MCF 10A (cell line): ENCODE measurements at regions of chr9 and their contacts with region 1.

Region 1: DNA sequence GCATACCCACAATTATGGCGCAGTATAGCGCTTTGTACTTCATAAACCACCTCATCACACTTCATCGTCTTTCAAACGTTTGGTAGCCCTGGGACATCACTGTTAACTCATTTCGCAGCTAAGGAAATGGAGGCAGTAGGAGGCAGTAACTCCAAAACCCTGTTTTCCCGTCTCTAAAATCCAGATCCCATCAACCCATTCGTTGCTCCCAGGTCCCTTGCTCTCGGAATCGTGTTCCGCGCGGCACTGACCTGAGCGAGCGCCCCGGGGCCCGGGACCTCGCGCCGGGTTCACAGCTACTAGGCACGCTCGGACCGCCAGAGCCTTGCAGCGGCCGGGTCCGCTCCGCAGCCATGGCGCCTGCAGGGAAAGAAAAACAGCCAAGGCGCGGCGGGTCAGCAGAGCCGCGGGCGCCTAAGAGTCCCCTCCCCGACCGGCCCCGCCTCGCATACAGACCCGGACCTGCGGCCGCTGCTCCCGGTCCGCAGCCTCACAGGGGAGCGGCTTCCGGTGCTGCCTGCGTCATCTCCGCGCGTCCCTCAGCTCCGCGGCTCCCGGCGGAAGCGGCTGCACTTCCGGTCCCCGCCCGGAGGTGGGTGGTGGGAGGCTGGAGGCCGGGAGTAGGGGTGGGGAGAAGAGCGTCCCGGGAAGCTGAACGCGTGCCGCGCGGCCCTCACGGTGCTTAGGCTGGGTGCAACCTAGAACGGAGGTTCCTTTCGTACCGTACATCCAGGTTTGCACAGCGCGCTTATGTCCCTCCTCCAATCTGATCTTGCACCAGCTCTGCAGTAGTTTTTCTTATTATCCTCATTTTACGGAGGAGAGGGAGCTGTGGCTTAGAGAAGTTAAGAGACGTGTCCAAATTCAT is at the start of gene FBXW2:
- DNase-seq: peak; percentile 88
- H3K4me3 Mint-ChIP-seq: peak within 1 kb of the TSS; percentile 89
- H3K27ac Mint-ChIP-seq: peak within 1 kb of the TSS; percentile 97
- H3K4me1 Mint-ChIP-seq: peaks cover 10% of the 10 kb centered on the region
- H3K27me3 Mint-ChIP-seq: no peaks in the 10 kb centered on the region
- CTCF ChIP-seq: no peak
- total RNA-seq, gene FBXW2: 53.9 and 58.4 TPM in 2 replicates

Region 2: GRCh38 chr9:120714088-120714845 is 78.9 kb before region 1 on chr9 and contains the start of gene MEGF9:
- CTCF ChIA-PET with region 1: no interaction called
- POLR2A ChIA-PET with region 1: interaction called, 25 read pairs
- intact Hi-C with region 1: no loop called
- DNase-seq: peak; percentile 98
- H3K4me3 Mint-ChIP-seq: peak within 1 kb of the TSS; percentile 91
- H3K27ac Mint-ChIP-seq: peak within 1 kb of the TSS; percentile 95
- H3K4me1 Mint-ChIP-seq: peaks cover 20% of the 10 kb centered on the region
- H3K27me3 Mint-ChIP-seq: no peaks in the 10 kb centered on the region
- CTCF ChIP-seq: no peak
- total RNA-seq, gene MEGF9: 5.7 and 6.9 TPM in 2 replicates

Region 3: GRCh38 chr9:120767456-120768167 is 25.5 kb before region 1 on chr9:
- CTCF ChIA-PET with region 1: interaction called, 6 read pairs
- POLR2A ChIA-PET with region 1: interaction called, 18 read pairs
- intact Hi-C with region 1: no loop called
- DNase-seq: no peak
- H3K4me3 Mint-ChIP-seq: no peak overlapping the region
- H3K27ac Mint-ChIP-seq: no peak overlapping the region
- H3K4me1 Mint-ChIP-seq: no peaks in the 10 kb centered on the region
- H3K27me3 Mint-ChIP-seq: no peaks in the 10 kb centered on the region
- CTCF ChIP-seq: no peak

Region 4: DNA sequence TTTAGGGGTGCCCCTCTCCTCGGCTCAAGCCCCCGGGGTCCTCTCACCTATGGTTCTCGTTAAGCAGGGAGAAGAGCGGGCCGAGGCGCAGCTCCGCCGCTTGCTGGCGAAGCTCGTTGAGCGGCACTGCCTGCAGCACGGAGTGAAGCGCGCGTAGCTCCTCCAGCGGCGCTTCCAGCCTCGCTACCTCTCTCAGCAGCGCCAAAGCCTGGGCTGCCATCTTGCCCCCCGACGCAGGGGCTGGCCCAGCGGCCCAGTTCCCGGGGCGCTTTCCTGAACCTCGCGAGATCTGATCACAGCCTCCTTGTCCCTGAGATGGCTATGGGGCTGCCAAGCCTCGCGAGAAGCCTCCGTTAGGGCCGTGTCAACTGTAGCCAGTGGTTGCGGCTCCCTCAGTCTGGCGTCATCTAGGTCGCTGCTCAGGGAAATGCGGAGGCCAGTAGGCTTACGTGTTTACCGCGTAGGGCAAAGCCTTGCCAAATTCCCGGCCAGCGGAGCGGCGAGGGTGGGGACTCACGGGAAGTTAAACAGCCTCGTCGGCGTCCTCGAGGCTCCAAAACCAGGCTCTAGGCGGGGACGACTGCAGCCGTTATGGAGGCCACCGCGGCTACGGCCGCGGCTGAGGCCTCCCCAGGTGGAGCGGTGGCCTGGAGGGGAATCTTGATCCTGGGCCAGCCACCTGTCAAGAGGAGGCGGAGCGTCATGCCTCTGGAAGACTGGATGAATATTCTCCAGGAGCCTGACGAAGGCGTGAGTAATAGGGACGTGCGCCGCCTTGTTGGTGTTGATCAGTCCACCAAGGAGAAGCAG is 49.8 kb after region 1 on chr9 and contains the start of gene PSMD5:
- CTCF ChIA-PET with region 1: no interaction called
- POLR2A ChIA-PET with region 1: interaction called, 45 read pairs
- intact Hi-C with region 1: loop called (anchors 2 kb)
- DNase-seq: peak; percentile 100
- H3K4me3 Mint-ChIP-seq: peak within 1 kb of the TSS; percentile 100
- H3K27ac Mint-ChIP-seq: peak within 1 kb of the TSS; percentile 99
- H3K4me1 Mint-ChIP-seq: peaks cover 31% of the 10 kb centered on the region
- H3K27me3 Mint-ChIP-seq: no peaks in the 10 kb centered on the region
- CTCF ChIP-seq: no peak
- total RNA-seq, gene PSMD5: 71.0 and 91.0 TPM in 2 replicates

Region 5: DNA sequence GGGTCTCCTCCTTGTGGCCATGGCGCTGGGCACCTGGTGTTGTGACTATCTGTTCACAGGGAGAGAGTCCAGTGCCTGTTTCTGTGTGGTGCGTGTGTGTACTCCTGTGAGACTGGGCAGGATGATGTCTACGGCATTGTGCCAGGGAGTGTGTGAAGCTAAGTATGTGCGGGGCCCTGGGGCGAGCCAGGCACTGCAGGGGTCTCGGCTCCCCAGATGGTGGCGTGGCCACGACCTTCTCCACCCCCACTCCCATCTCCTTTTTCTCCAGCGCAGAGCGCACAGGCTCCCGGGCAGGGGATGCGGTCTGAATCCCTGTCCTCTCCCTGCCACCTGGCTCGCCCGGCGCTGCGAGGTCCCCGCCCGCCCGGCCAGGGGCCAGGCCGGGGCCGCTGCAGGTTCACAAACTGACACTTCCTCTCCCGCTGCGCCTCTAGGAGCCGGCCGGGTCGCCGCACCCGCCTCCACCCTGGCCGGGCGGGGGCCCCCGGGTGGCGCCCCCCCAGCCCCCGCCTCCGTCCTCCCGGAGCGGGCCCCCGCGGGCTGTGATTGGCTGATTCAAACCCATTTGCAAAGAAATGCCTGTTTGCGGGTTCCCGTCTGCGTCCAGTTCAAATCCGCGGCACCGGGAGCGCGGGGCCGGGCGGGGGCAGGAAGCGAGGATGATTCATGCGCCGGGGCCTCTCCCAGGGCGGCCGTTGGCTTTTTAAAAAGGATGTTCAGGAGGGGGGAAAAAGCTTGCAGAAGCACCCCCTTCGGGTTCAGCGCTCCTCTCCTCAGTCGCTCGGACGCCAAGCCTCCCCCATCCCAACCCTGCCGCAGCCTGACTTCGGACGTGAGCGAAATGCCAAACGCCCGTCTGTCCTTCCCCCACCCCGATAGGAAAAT is 83.1 kb after region 1 on chr9:
- CTCF ChIA-PET with region 1: no interaction called
- POLR2A ChIA-PET with region 1: interaction called, 10 read pairs
- intact Hi-C with region 1: loop called (anchors 1 kb)
- DNase-seq: peak; percentile 93
- H3K4me3 Mint-ChIP-seq: peak overlapping the region; percentile 76
- H3K27ac Mint-ChIP-seq: peak overlapping the region; percentile 33
- H3K4me1 Mint-ChIP-seq: peaks cover 40% of the 10 kb centered on the region
- H3K27me3 Mint-ChIP-seq: no peaks in the 10 kb centered on the region
- CTCF ChIP-seq: no peak

Region 6: DNA sequence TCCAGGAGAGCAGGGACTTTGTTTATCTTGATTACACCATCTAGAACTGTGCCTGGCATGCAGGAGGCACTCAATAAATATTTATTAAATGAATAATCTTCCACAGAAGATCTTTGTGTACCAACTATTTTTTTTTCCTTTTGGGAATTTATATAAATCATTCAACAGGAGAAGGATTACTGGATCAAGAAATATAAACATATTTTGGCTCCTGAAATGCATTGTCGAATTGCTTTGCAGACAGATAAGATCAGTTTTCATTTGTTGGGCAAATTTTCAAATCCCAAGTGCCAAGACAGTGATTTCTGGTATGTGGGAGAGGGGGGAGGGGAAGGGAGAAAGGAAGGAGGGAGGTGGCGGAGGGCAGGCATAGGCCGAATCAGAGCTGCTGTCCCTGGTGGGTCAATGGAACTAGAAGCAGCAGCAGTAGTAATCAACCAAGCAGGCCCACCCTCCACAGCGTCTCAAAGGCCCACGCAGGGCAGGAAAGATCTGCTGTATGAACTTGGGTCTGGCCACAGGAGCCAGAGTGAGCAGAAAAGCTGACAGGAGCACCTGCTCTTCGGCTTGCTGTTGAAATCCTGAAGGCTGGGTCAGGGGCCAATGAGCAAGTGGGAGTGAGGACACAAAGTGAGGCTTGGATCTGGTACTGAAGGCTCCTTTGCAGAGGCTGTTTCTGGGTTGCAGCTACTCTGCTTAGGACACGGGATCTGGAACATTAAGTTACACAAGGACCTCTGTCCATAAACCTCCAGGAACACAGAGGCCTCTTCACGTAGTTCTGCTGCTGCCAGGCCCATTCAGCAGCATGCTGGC is 149.3 kb after region 1 on chr9:
- CTCF ChIA-PET with region 1: interaction called, 5 read pairs
- POLR2A ChIA-PET with region 1: interaction called, 30 read pairs
- intact Hi-C with region 1: no loop called
- DNase-seq: peak; percentile 31
- H3K4me3 Mint-ChIP-seq: no peak overlapping the region
- H3K27ac Mint-ChIP-seq: peak overlapping the region; percentile 58
- H3K4me1 Mint-ChIP-seq: peaks cover 27% of the 10 kb centered on the region
- H3K27me3 Mint-ChIP-seq: no peaks in the 10 kb centered on the region
- CTCF ChIP-seq: no peak

Region 7: DNA sequence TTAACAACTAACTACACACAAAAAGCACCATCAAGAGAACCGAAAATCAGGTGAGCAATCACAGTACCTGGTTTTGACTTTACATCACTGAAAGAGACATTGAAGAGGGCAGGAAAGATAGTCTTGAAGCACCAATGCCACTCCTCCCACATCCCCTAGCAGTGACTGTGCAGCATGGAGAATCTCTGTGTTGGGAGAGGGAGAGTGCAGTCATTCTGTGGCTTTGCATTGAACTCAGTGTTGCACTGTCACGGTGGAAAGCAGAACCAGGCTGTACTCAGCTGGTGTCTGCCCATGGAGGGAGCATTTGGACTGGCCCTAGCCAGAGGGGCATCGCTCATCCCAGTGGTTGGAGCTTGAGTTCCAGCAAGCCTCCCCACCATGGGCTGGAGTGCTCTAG is 216.5 kb after region 1 on chr9:
- CTCF ChIA-PET with region 1: no interaction called
- POLR2A ChIA-PET with region 1: no interaction called
- intact Hi-C with region 1: no loop called
- DNase-seq: no peak
- H3K4me3 Mint-ChIP-seq: no peak overlapping the region
- H3K27ac Mint-ChIP-seq: no peak overlapping the region
- H3K4me1 Mint-ChIP-seq: no peaks in the 10 kb centered on the region
- H3K27me3 Mint-ChIP-seq: no peaks in the 10 kb centered on the region
- CTCF ChIP-seq: no peak

Region 8: DNA sequence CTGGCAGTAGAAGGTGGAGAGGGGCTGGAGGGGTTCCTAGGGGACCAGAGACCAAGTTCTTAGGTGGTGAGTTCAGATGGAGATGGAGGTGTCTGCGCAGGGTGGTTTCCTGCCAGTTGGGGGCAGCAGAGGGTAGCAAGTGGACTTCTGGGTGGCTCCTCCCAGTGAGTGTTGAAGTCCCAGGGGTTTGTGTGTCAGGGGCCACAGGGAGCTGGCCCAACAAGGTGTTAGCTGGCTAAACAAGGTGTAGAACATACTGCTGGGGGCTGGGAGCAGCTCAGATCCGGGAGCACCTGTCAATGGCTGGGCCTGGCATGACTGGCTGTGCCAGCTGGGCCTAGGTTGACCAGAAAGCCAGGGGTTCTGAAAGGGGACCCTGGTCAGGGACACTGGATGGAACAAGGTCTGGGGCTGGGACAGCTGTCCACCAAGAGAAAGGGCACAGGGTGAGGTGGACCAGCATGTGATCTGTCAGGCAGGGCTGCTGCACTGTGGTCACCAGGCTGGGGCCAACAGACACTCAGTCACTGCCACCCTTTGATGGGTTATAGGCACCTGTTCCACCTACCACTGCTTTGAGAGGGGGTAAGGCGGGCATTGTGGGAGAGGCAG is 893.9 kb after region 1 on chr9:
- CTCF ChIA-PET with region 1: no interaction called
- POLR2A ChIA-PET with region 1: no interaction called
- intact Hi-C with region 1: no loop called
- DNase-seq: peak; percentile 70
- H3K4me3 Mint-ChIP-seq: no peak overlapping the region
- H3K27ac Mint-ChIP-seq: no peak overlapping the region
- H3K4me1 Mint-ChIP-seq: peaks cover 2% of the 10 kb centered on the region
- H3K27me3 Mint-ChIP-seq: no peaks in the 10 kb centered on the region
- CTCF ChIP-seq: peak; percentile 92